GM10248 (cell line): ENCODE measurements at regions of chr5 and their contacts with region 1.

Region 1: GRCh38 chr5:181223058-181223728 is at the start of gene TRIM41:
- DNase-seq: peak; percentile 90
- CTCF ChIP-seq: no peak

Region 2: DNA sequence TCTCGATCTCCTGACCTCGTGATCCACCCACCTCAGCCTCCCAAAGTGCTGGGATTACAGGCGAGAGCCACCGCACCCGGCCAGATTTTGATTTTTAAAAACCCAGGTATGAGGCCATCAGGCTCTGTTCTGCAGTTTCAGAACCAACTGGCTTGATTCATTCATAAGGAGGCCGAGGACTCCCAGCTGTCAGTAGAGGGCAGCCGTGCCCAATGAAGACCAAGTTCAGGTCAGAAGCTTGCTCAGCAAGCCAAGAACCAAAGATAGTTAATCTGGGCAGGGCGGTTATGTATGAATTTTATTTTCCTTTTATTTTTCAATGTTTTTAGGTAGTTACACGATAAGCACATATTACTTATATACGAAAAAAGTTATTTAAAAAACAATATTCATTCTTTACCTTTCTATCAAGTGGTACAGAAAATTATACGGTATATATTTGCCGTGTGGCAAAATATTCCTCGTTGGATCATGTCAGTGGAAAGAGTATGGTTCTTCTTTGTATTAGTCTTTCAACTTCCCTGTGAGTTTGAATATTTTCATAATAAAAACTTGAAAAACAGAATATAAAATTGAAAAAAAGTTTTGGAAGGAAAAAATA is 438.6 kb before region 1 on chr5:
- CTCF ChIA-PET with region 1: no interaction called
- POLR2A ChIA-PET with region 1: no interaction called
- DNase-seq: peak; percentile 83
- CTCF ChIP-seq: peak; percentile 82

Region 3: GRCh38 chr5:181234455-181235306 is 11.5 kb after region 1 on chr5:
- CTCF ChIA-PET with region 1: interaction called, 3 read pairs
- POLR2A ChIA-PET with region 1: interaction called, 15 read pairs
- DNase-seq: no peak
- CTCF ChIP-seq: no peak